ENCODE measurements at regions of chr17 and their contacts with region 1.

Region 1: DNA sequence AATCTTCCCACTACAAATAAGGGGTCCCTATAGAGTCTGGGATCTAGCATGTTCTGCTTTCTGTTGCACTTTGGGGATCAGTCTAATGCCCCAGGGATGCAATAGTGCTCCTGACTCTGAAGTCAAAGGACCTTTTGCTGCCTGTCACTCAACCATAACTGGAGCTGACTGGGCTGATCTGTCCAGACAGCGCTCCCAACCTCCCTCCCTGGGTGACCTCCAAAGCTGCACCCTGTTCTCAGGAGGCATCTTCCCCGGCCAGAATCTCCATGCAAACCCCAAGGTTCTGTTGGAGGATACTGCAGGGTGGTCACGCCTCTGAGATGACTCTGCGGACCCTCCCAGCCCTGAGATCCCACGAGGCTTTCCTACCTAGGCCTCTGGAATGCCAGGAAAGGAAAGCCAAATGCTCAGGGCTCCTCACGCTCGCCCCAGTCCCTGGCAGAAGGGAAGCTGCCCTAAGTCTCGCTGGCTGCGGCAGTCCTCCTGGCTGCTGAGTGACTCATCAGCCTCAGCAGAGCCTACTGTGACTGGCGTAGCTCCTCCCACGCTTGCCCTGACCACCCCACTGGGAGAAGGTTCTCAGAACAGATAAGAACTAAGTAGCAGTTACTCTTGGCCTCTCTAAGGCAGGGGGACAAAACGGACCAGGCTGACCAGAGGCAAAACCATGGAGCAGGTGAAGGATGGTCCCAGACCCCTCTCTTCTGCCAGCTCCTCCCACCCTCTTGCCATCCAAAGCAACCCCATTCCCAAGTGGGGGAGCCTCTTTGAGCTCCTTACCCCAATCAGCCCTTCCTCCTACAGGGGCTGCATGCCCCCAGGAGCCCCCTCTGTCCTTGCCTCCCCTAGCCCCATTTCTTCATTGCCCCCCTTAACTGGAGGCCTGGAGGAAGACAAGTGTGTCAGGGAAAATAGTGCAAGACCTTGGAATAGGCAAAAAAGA is 124.1 kb upstream of the TNRC6C start:
- DNase-seq: peak; percentile 75
- H3K4me3 ChIP-seq: no peak overlapping the region
- H3K27ac ChIP-seq: no peak overlapping the region
- H3K4me1 ChIP-seq: peaks cover 31% of the 10 kb centered on the region
- H3K27me3 ChIP-seq: no peaks in the 10 kb centered on the region
- CTCF ChIP-seq: no peak
- POLR2A ChIP-seq: no peak

Region 2: DNA sequence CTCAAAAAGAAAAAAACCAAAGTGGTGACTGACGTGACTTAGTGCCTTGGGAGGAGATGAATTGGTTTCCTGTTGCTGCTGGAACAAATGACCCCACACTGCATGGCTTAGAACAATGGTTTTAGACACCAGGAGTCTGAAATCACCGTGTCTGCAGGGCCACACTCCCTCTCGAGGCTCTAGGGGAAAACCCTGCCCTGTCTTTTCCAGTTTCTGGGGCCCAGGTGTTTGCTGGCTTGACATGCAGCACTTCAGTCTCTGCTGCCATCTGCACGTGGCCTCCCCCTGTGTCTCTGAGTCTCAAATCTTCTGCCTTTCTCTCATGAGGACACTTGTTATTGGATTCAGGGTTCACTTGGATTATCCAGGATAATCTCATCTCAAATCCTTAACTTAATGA is 199.7 kb before region 1 on chr17:
- CTCF ChIA-PET with region 1: no interaction called
- POLR2A ChIA-PET with region 1: no interaction called
- dilution Hi-C with region 1: no loop called
- intact Hi-C with region 1: no loop called
- DNase-seq: peak; percentile 13
- H3K4me3 ChIP-seq: no peak overlapping the region
- H3K27ac ChIP-seq: no peak overlapping the region
- H3K4me1 ChIP-seq: no peaks in the 10 kb centered on the region
- H3K27me3 ChIP-seq: peaks cover 0 to 2% of the 10 kb centered on the region in 2 experiments
- CTCF ChIP-seq: no peak
- POLR2A ChIP-seq: no peak

Region 3: GRCh38 chr17:77999413-78000173 is 165.2 kb after region 1 on chr17:
- CTCF ChIA-PET with region 1: no interaction called
- POLR2A ChIA-PET with region 1: no interaction called
- dilution Hi-C with region 1: no loop called
- intact Hi-C with region 1: loop called (anchors 2 kb)
- DNase-seq: peak; percentile 66
- H3K4me3 ChIP-seq: no peak overlapping the region
- H3K27ac ChIP-seq: peak overlapping the region; percentile 79
- H3K4me1 ChIP-seq: peaks cover 39% of the 10 kb centered on the region
- H3K27me3 ChIP-seq: no peaks in the 10 kb centered on the region
- CTCF ChIP-seq: no peak
- POLR2A ChIP-seq: no peak